Aorta (tissue), 5 donors: ENCODE measurements at regions of chr3 and their contacts with region 1.

Region 1: DNA sequence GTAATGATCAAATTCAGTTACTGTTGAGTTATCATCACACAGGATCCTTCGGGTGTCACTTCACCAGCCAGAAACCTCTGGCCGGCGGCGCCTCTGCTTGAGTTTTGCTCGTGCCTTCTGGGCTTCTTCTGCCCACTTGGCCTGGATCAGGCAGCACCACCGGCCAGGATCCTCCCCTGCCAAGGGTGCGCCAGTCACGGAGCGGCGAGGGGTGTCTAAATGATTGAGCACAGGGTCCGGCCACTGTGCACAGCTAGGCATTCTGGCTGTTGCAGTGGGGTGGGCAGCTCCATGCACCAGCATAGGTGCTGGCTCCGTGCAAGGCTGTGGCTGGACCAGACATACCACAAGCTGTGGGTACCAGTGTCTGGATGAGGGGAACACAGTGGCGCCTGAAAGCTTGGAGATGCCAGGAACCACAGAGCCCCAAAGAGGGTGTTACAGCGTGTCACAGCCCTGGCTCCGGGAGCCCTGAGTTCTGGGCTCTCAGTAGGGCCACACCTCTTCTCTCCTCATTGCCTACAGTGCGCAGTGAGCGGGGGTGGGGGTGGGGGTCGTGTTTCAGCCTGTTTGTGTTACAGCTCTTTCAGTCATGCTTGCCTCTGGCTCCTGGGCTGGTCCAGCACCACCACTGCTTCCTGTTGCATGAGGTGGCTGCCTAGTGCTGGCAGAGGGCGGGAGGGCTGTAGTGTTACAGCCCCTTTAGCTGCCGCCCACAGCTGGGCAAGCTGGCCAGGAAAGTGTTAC is 169.4 kb downstream of the FNDC3B start:
- DNase-seq: peak; percentile 70 to 83
- ATAC-seq: peak; percentile 59
- H3K4me3 ChIP-seq: no peak overlapping the region
- H3K27ac ChIP-seq: peak overlapping the region; percentile 78 to 91
- H3K4me1 ChIP-seq: peaks cover 9 to 16% of the 10 kb centered on the region in 2 donors
- H3K27me3 ChIP-seq: no peaks in the 10 kb centered on the region

Region 2: GRCh38 chr3:171393032-171393744 is 815.6 kb before region 1 on chr3:
- intact Hi-C with region 1: no loop called
- DNase-seq: no peak
- ATAC-seq: no peak
- H3K4me3 ChIP-seq: no peak overlapping the region
- H3K27ac ChIP-seq: no peak overlapping the region
- H3K4me1 ChIP-seq: peaks cover 4 to 6% of the 10 kb centered on the region in 2 donors
- H3K27me3 ChIP-seq: no peaks in the 10 kb centered on the region

Region 3: GRCh38 chr3:172153335-172153861 is 55.4 kb before region 1 on chr3:
- intact Hi-C with region 1: loop called (anchors 1 to 5 kb)
- DNase-seq: peak; percentile 95
- ATAC-seq: peak; percentile 99
- H3K4me3 ChIP-seq: no peak overlapping the region
- H3K27ac ChIP-seq: peak overlapping the region; percentile 96 to 99
- H3K4me1 ChIP-seq: peaks cover 6 to 15% of the 10 kb centered on the region in 2 donors
- H3K27me3 ChIP-seq: no peaks in the 10 kb centered on the region

Region 4: GRCh38 chr3:172249039-172249438 is 40.3 kb after region 1 on chr3:
- intact Hi-C with region 1: loop called in 1 of 2 experiments (anchors 5 kb)
- DNase-seq: no peak
- ATAC-seq: no peak
- H3K4me3 ChIP-seq: no peak overlapping the region
- H3K27ac ChIP-seq: no peak overlapping the region
- H3K4me1 ChIP-seq: no peaks in the 10 kb centered on the region
- H3K27me3 ChIP-seq: no peaks in the 10 kb centered on the region

Region 5: GRCh38 chr3:172256101-172256734 is 47.5 kb after region 1 on chr3:
- intact Hi-C with region 1: loop called (anchors 5 kb)
- DNase-seq: no peak
- ATAC-seq: peak; percentile 82
- H3K4me3 ChIP-seq: no peak overlapping the region
- H3K27ac ChIP-seq: peak overlapping the region; percentile 53 to 92
- H3K4me1 ChIP-seq: peaks cover 15 to 17% of the 10 kb centered on the region in 2 donors
- H3K27me3 ChIP-seq: no peaks in the 10 kb centered on the region

Region 6: GRCh38 chr3:172270557-172271166 is 61.9 kb after region 1 on chr3:
- intact Hi-C with region 1: no loop called
- DNase-seq: no peak
- ATAC-seq: no peak
- H3K4me3 ChIP-seq: no peak overlapping the region
- H3K27ac ChIP-seq: no peak overlapping the region
- H3K4me1 ChIP-seq: peaks cover 0 to 6% of the 10 kb centered on the region in 2 donors
- H3K27me3 ChIP-seq: no peaks in the 10 kb centered on the region

Region 7: DNA sequence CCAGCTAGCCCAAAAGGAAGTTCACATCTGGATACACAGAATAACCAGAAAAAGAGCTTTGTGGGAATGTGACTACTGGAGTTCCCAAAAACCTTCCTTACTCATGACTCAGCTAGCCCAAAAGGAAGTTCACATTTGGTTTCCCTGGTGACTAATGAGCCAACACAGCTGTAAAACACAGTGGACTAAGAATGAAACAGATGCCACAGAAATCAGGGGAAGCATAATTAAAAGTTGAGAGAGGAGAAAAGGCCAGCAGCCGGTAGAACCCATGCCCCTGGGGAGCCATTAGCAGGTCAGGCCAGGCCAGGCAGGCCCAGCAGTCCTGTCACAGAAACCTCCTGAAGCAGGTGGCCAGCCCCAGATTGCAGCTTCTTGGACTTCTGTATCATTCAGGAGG is 109.2 kb after region 1 on chr3:
- intact Hi-C with region 1: loop called (anchors 5 to 10 kb)
- DNase-seq: peak; percentile 70 to 82
- ATAC-seq: peak; percentile 86
- H3K4me3 ChIP-seq: no peak overlapping the region
- H3K27ac ChIP-seq: peak overlapping the region; percentile 86 to 99
- H3K4me1 ChIP-seq: peaks cover 16 to 34% of the 10 kb centered on the region in 2 donors
- H3K27me3 ChIP-seq: no peaks in the 10 kb centered on the region

Region 8: DNA sequence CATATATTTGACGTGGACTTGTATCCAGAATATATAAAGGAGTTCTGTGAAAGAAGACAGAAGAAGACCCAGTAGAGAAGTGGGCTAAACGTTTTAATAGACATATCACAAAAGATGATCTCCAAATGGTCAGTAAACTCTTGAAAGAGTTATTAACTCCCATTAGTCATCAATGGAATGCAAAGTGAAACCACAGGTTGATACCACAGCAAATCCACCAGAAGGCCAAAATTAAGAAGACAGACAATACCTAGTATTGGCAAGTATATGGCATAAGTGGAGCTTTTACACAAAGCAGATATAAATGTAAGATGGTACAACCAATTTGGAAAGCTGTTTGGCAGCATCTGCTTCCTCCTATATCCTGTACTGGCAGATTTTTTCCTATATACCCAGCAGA is 926.3 kb after region 1 on chr3:
- intact Hi-C with region 1: no loop called
- DNase-seq: no peak
- ATAC-seq: no peak
- H3K4me3 ChIP-seq: no peak overlapping the region
- H3K27ac ChIP-seq: no peak overlapping the region
- H3K4me1 ChIP-seq: no peaks in the 10 kb centered on the region
- H3K27me3 ChIP-seq: no peaks in the 10 kb centered on the region